Sigmoid colon (tissue), 7 donors: ENCODE measurements at regions of chr13 and their contacts with region 1.

Region 1: DNA sequence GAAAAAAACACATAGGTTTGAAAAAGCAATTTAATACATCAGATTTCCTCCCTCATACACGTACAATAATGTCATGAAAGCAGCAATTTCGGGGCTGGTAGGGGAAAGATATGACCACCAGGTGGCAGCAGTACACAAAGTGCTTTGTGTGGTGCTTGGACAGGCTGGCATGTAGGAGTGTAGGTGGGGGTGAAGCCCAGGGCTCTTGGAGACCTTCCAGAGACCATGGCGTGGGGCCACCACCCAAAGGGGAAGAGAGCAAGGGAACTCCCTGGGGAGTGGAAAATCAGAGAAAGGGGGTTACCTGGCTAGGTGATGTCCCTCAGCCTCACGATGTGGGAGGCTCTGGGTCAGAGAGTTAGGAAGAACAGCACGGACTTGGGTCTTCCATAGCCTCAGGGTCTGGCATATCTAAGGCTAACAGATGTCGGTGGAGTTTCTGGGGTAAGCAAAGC is 11.8 kb upstream of the CCNA1 start:
- DNase-seq: peak; percentile 75
- H3K4me3 ChIP-seq: no peak overlapping the region
- H3K27ac ChIP-seq: no peak overlapping the region
- H3K4me1 ChIP-seq: peaks cover 0 to 5% (median 2%) of the 10 kb centered on the region in 4 donors
- H3K27me3 ChIP-seq: no peaks in the 10 kb centered on the region
- CTCF ChIP-seq: peak in 3 of 4 experiments; percentile 71 to 81 (median 79)
- EP300 ChIP-seq: no peak
- POLR2A ChIP-seq: no peak

Region 2: GRCh38 chr13:36107521-36108107 is 312.9 kb before region 1 on chr13:
- intact Hi-C with region 1: no loop called
- DNase-seq: no peak
- H3K4me3 ChIP-seq: no peak overlapping the region
- H3K27ac ChIP-seq: no peak overlapping the region
- H3K4me1 ChIP-seq: no peaks in the 10 kb centered on the region
- H3K27me3 ChIP-seq: no peaks in the 10 kb centered on the region
- CTCF ChIP-seq: no peak
- EP300 ChIP-seq: no peak
- POLR2A ChIP-seq: no peak

Region 3: DNA sequence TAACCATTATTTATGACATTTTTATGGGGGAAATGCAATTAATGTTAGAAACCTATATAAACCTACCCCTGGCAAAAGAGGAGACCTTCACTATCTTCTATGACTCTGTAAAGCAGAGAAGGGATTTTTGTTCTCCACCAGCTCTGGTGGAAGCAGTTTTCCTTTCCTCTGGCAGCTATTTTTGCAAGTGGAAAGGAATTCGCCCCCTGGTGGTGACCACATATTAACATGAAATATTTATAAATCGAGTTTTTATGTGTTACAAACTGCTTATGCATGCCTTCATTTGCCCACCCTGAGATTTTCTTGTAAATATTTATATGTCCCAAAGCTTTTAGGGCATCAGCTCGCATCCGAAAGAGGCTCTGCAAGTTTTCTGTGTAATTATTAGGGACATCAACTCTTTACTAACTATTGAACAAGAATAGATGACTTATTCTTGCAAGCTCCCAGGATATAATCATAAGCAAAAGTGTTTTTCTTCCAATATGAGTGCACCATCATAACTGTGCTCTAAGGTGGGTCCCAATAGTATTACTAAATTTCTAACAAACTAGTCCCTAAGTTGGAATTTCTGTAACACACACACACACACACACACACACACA is 315.8 kb after region 1 on chr13:
- intact Hi-C with region 1: loop called (anchors 2 kb)
- DNase-seq: peak; percentile 69
- H3K4me3 ChIP-seq: no peak overlapping the region
- H3K27ac ChIP-seq: no peak overlapping the region
- H3K4me1 ChIP-seq: no peaks in the 10 kb centered on the region
- H3K27me3 ChIP-seq: no peaks in the 10 kb centered on the region
- CTCF ChIP-seq: peak; percentile 32 to 69 (median 59)
- EP300 ChIP-seq: no peak
- POLR2A ChIP-seq: no peak